Activated CD4-positive, alpha-beta memory T cell treated with anti-CD3 and anti-CD28 coated beads for 36 hours (primary cell): ENCODE measurements at regions of chr19 and their contacts with region 1.

Region 1: GRCh38 chr19:18224525-18225354 is 1.5 kb downstream of the PDE4C start:
- DNase-seq: peak; percentile 96
- H3K4me3 Mint-ChIP-seq: peak overlapping the region; percentile 71
- H3K27ac Mint-ChIP-seq: no peak overlapping the region
- H3K4me1 Mint-ChIP-seq: peaks cover 21% of the 10 kb centered on the region
- H3K27me3 Mint-ChIP-seq: peaks cover 57% of the 10 kb centered on the region

Region 2: GRCh38 chr19:18160971-18161635 is 63.6 kb before region 1 on chr19:
- CTCF ChIA-PET with region 1: no interaction called
- POLR2A ChIA-PET with region 1: interaction called, 3 read pairs
- intact Hi-C with region 1: loop called (anchors 2 kb)
- DNase-seq: peak; percentile 84
- H3K4me3 Mint-ChIP-seq: peak overlapping the region; percentile 64
- H3K27ac Mint-ChIP-seq: no peak overlapping the region
- H3K4me1 Mint-ChIP-seq: peaks cover 4% of the 10 kb centered on the region
- H3K27me3 Mint-ChIP-seq: no peaks in the 10 kb centered on the region

Region 3: GRCh38 chr19:18245297-18245696 is 20.6 kb after region 1 on chr19:
- CTCF ChIA-PET with region 1: no interaction called
- POLR2A ChIA-PET with region 1: no interaction called
- intact Hi-C with region 1: loop called (anchors 2 kb)
- DNase-seq: no peak
- H3K4me3 Mint-ChIP-seq: no peak overlapping the region
- H3K27ac Mint-ChIP-seq: no peak overlapping the region
- H3K4me1 Mint-ChIP-seq: no peaks in the 10 kb centered on the region
- H3K27me3 Mint-ChIP-seq: peaks cover 3% of the 10 kb centered on the region